ENCODE measurements at regions of chr17 and their contacts with region 1.

Region 1: GRCh38 chr17:59155439-59156182 is at the start of gene PRR11:
- DNase-seq: peak; percentile 100
- ATAC-seq: peak; percentile 87
- H3K4me3 ChIP-seq: peak within 1 kb of the TSS; percentile 71 to 80
- H3K27ac ChIP-seq: peak within 1 kb of the TSS; percentile 90
- H3K4me1 ChIP-seq: peaks cover 31 to 46% of the 10 kb centered on the region in 2 experiments
- H3K27me3 ChIP-seq: no peaks in the 10 kb centered on the region
- CTCF ChIP-seq: no peak
- POLR2A ChIP-seq: no peak
- RAD21 ChIP-seq: no peak
- total RNA-seq, gene PRR11: 86.7 TPM

Region 2: DNA sequence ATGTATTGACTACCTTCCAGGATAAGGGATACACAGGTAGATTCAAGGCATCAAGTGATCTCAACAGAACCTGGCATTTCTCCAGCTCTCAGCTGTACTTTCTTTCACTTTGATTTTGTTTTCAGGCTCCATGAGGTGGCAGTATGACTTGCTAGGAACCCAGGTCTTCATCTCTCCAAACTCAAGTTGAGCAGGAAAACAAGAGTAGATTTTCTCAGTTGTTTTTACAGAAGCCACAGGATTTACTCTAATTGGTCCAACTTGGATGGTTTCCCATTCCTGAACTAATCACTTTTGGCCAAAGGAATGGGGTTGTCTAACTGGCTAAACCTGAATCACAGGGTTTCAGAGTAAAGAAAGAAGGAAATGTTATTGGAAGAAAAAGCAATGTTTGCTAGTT is 195.5 kb before region 1 on chr17:
- CTCF ChIA-PET with region 1: no interaction called
- POLR2A ChIA-PET with region 1: no interaction called
- RAD21 ChIA-PET with region 1: no interaction called
- intact Hi-C with region 1: no loop called
- DNase-seq: peak; percentile 63
- ATAC-seq: peak; percentile 74
- H3K4me3 ChIP-seq: no peak overlapping the region
- H3K27ac ChIP-seq: no peak overlapping the region
- H3K4me1 ChIP-seq: peaks cover 14 to 18% of the 10 kb centered on the region in 2 experiments
- H3K27me3 ChIP-seq: no peaks in the 10 kb centered on the region
- CTCF ChIP-seq: peak; percentile 29 to 55 (median 42); a peak in 4 of 6 replicates
- POLR2A ChIP-seq: no peak
- RAD21 ChIP-seq: peak; percentile 66

Region 3: GRCh38 chr17:59106463-59107305 is 48.9 kb before region 1 on chr17 and contains the start of gene TRIM37:
- CTCF ChIA-PET with region 1: no interaction called
- POLR2A ChIA-PET with region 1: no interaction called
- RAD21 ChIA-PET with region 1: interaction called in 1 of 2 experiments, 4 read pairs
- intact Hi-C with region 1: loop called (anchors 1 kb)
- DNase-seq: peak; percentile 100
- ATAC-seq: peak; percentile 96
- H3K4me3 ChIP-seq: peak within 1 kb of the TSS; percentile 65 to 86
- H3K27ac ChIP-seq: peak within 1 kb of the TSS; percentile 80
- H3K4me1 ChIP-seq: peaks cover 12 to 19% of the 10 kb centered on the region in 2 experiments
- H3K27me3 ChIP-seq: no peaks in the 10 kb centered on the region
- CTCF ChIP-seq: 0 out of 6 replicates have a peak, but pooled peaks of 1 of the 3 experiments have one; percentile 5
- POLR2A ChIP-seq: peak; percentile 84
- RAD21 ChIP-seq: no peak
- total RNA-seq, gene TRIM37: 55.7 TPM